CD14-positive monocyte (primary cell): ENCODE measurements at regions of chr19 and their contacts with region 1.

Region 1: DNA sequence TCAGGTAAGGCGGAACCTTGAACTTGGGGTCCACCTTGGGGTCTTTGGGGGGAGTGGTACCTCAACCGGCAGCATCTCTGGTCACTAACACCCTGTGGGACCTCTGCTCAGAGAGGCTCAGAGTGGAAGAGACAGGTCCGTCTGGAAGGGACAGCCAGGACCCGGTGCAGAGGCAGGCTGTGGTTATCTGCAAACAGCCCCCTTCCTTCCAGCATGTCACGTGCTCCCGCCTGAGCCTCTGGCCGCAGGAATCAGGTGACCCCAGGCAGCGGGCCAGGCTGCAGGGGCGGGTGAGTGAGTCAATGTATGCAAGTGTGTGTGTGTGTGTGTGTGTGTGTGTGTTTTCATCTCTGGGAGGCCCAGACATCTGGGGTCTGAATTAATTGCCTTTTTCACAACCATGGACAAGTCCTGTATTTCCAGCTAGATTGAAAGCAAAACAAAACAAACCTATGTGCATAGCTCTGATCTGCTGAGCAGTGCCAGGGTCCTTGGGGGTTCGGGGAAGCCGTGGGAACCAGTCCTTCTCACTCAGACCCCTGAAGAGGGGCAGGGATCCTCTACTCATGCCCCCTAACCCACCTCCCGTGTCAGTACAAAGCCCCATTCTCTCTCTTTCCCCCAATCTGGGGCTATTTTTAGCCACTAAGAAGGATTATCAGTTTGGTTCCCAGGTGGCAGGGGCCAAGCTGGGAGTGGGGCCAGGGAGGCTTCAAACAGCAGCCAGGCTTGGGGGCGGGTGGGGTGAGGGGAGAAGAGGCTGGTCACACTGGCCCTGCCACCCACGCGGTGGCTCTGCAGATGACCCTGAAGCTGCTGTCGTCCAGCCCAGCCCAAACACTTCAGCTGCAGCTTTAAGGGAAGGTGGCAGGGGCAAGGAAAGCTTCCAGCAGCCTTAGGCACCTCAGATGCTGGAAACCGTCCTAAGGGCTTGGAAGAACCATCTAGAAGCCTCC is 31.4 kb downstream of the CERS4 start:
- DNase-seq: peak; percentile 72 to 87 (median 81)
- H3K4me3 ChIP-seq: peak overlapping the region in 1 of 3 experiments; percentile 59
- H3K4me3 Mint-ChIP-seq: peak overlapping the region; percentile 21 to 87
- H3K27ac ChIP-seq: peak overlapping the region in 1 of 2 donors; percentile 8
- H3K27ac Mint-ChIP-seq: peak overlapping the region in 3 of 7 donors; percentile 62 to 85 (median 71)
- H3K4me1 ChIP-seq: peaks cover 39 to 44% of the 10 kb centered on the region in 2 donors
- H3K4me1 Mint-ChIP-seq: peaks cover 45% of the 10 kb centered on the region
- H3K27me3 ChIP-seq: peaks cover 0 to 11% of the 10 kb centered on the region in 2 donors
- H3K27me3 Mint-ChIP-seq: peaks cover 27 to 55% (median 30%) of the 10 kb centered on the region in 3 donors
- CTCF ChIP-seq: no peak

Region 2: GRCh38 chr19:8185343-8186068 is 55.0 kb before region 1 on chr19:
- intact Hi-C with region 1: loop called in 1 of 2 experiments (anchors 5 kb)
- DNase-seq: no peak
- H3K4me3 ChIP-seq: no peak overlapping the region
- H3K4me3 Mint-ChIP-seq: no peak overlapping the region
- H3K27ac ChIP-seq: no peak overlapping the region
- H3K27ac Mint-ChIP-seq: no peak overlapping the region
- H3K4me1 ChIP-seq: peaks cover 31 to 36% of the 10 kb centered on the region in 2 donors
- H3K4me1 Mint-ChIP-seq: peaks cover 32% of the 10 kb centered on the region
- H3K27me3 ChIP-seq: no peaks in the 10 kb centered on the region
- H3K27me3 Mint-ChIP-seq: peaks cover 2 to 17% (median 3%) of the 10 kb centered on the region in 3 donors
- CTCF ChIP-seq: no peak